ENCODE measurements at regions of chr19 and their contacts with region 1.

Region 1: DNA sequence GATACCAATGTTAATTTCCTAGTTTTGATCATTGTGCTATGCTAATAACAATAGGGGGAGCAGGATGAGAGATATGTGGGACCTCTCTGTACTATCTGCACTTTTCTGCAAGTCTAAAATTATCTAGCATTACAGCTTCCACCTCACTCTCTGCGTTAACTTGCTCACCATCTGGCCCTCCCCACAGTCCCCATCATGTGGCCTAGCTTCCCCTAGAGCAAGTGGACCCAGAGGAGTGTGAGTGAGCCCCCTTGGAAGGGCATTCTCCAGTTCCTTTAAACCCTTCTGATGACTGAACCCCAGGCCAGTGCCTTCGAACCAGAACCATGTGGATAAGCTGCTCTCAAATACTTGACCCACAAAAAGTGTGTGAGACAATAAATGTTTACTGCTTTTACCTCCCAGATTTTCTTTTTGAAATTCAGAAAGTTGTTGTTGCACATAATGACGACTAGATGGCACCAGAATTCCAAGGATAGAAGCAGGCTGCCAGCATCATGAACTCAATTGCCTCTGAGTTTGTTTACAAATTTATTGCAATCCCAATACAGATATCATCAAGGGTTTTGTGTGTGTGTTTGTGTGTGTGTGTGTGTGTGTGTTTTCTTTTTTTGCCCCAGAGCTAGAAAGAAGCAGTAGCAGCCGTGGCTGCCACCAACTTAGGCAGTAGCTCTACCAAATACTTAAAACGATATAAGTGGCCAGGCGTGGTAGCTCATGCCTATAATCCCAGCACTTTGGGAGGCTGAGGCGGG is 49.0 kb upstream of the ZNF780A start:
- DNase-seq: no peak
- ATAC-seq: peak in 1 of 2 donors; percentile 24
- H3K4me3 ChIP-seq: no peak overlapping the region
- H3K27ac ChIP-seq: no peak overlapping the region
- H3K4me1 ChIP-seq: no peaks in the 10 kb centered on the region
- H3K27me3 ChIP-seq: no peaks in the 10 kb centered on the region

Region 2: GRCh38 chr19:40190891-40191835 is 51.5 kb after region 1 on chr19 and contains the start of gene MAP3K10:
- intact Hi-C with region 1: no loop called
- DNase-seq: peak; percentile 84 to 92 (median 90)
- ATAC-seq: peak; percentile 96 to 97
- H3K4me3 ChIP-seq: peak within 1 kb of the TSS; percentile 68
- H3K27ac ChIP-seq: peak within 1 kb of the TSS; percentile 88
- H3K4me1 ChIP-seq: peaks cover 8% of the 10 kb centered on the region
- H3K27me3 ChIP-seq: no peaks in the 10 kb centered on the region
- total RNA-seq, gene MAP3K10: 16.9 to 22.6 (median 20.2) TPM

Region 3: GRCh38 chr19:40221858-40222837 is 82.4 kb after region 1 on chr19:
- intact Hi-C with region 1: loop called (anchors 5 to 10 kb)
- DNase-seq: peak; percentile 80 to 84 (median 84)
- ATAC-seq: peak; percentile 84 to 87
- H3K4me3 ChIP-seq: no peak overlapping the region
- H3K27ac ChIP-seq: no peak overlapping the region
- H3K4me1 ChIP-seq: peaks cover 3% of the 10 kb centered on the region
- H3K27me3 ChIP-seq: no peaks in the 10 kb centered on the region